Activated CD4-positive, alpha-beta T cell treated with anti-CD3 and anti-CD28 coated beads for 36 hours (primary cell): ENCODE measurements at regions of chr16 and their contacts with region 1.

Region 1: DNA sequence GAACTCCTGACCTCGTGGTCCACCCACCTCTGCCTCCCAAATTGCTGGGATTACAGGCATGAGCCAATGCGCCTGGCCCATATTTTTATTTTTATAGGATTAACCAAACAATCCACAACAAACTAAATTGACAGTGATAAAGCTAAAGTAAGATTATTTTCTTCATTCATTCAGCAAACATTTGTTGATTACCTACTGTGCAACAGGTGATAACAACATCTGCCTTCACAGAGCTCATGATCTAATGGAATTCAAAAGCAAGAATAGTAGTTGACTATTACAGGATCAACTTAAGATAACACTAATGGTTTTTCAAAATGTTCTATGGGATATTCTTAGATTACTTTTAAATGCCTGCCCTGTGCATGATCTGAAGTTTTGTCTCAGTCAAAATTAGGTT is 37.8 kb downstream of the NQO1 start:
- DNase-seq: no peak
- ATAC-seq: no peak
- H3K4me3 Mint-ChIP-seq: no peak overlapping the region
- H3K27ac Mint-ChIP-seq: no peak overlapping the region
- H3K4me1 Mint-ChIP-seq: peaks cover 17% of the 10 kb centered on the region
- H3K27me3 Mint-ChIP-seq: no peaks in the 10 kb centered on the region

Region 2: DNA sequence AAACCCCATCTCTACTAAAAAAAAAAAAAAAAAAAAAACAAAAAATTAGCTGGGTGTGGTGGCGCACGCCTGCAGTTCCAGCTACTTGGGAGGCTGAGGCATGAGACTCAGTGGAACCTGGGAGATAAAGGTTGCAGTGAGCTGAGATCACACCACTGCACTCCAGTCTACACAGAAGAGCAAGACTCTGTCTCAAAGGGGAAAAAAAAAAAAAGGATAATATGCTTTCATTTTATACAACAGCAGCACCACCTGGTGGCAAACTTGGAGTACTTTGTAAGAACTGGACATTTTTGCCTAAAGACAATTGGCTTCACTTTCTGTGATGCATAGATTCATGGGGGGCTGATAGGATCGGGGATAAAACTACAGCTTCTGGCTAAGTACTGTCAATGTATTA is 564.7 kb before region 1 on chr16:
- CTCF ChIA-PET with region 1: no interaction called
- POLR2A ChIA-PET with region 1: no interaction called
- intact Hi-C with region 1: no loop called
- DNase-seq: peak; percentile 79
- ATAC-seq: peak; percentile 51
- H3K4me3 Mint-ChIP-seq: no peak overlapping the region
- H3K27ac Mint-ChIP-seq: no peak overlapping the region
- H3K4me1 Mint-ChIP-seq: peaks cover 20% of the 10 kb centered on the region
- H3K27me3 Mint-ChIP-seq: no peaks in the 10 kb centered on the region

Region 3: GRCh38 chr16:69703638-69704037 is 15.0 kb after region 1 on chr16:
- CTCF ChIA-PET with region 1: interaction called, 13 read pairs
- POLR2A ChIA-PET with region 1: no interaction called
- intact Hi-C with region 1: no loop called
- DNase-seq: no peak
- ATAC-seq: no peak
- H3K4me3 Mint-ChIP-seq: no peak overlapping the region
- H3K27ac Mint-ChIP-seq: peak overlapping the region; percentile 11
- H3K4me1 Mint-ChIP-seq: no peaks in the 10 kb centered on the region
- H3K27me3 Mint-ChIP-seq: no peaks in the 10 kb centered on the region